Activated CD4-positive, alpha-beta memory T cell treated with anti-CD3 and anti-CD28 coated beads, Interleukin-2, amount 10 ng/mL, durations not matched to agents 7 days and 5 days (primary cell): ENCODE measurements at regions of chr10 and their contacts with region 1.

Region 1: GRCh38 chr10:3776796-3777571 is 8.0 kb downstream of the KLF6 start:
- DNase-seq: peak; percentile 64
- H3K4me3 Mint-ChIP-seq: peak overlapping the region; percentile 47
- H3K27ac Mint-ChIP-seq: peak overlapping the region; percentile 58
- H3K4me1 Mint-ChIP-seq: peaks cover 69% of the 10 kb centered on the region
- H3K27me3 Mint-ChIP-seq: no peaks in the 10 kb centered on the region

Region 2: GRCh38 chr10:3197348-3198003 is 579.5 kb before region 1 on chr10:
- CTCF ChIA-PET with region 1: no interaction called
- POLR2A ChIA-PET with region 1: interaction called, 11 read pairs
- DNase-seq: peak; percentile 90
- H3K4me3 Mint-ChIP-seq: peak overlapping the region; percentile 15
- H3K27ac Mint-ChIP-seq: no peak overlapping the region
- H3K4me1 Mint-ChIP-seq: peaks cover 23% of the 10 kb centered on the region
- H3K27me3 Mint-ChIP-seq: peaks cover 85% of the 10 kb centered on the region

Region 3: GRCh38 chr10:3740157-3740871 is 36.7 kb before region 1 on chr10:
- CTCF ChIA-PET with region 1: interaction called, 4 read pairs
- POLR2A ChIA-PET with region 1: interaction called, 63 read pairs
- DNase-seq: no peak
- H3K4me3 Mint-ChIP-seq: no peak overlapping the region
- H3K27ac Mint-ChIP-seq: peak overlapping the region; percentile 80
- H3K4me1 Mint-ChIP-seq: peaks cover 34% of the 10 kb centered on the region
- H3K27me3 Mint-ChIP-seq: peaks cover 2% of the 10 kb centered on the region

Region 4: DNA sequence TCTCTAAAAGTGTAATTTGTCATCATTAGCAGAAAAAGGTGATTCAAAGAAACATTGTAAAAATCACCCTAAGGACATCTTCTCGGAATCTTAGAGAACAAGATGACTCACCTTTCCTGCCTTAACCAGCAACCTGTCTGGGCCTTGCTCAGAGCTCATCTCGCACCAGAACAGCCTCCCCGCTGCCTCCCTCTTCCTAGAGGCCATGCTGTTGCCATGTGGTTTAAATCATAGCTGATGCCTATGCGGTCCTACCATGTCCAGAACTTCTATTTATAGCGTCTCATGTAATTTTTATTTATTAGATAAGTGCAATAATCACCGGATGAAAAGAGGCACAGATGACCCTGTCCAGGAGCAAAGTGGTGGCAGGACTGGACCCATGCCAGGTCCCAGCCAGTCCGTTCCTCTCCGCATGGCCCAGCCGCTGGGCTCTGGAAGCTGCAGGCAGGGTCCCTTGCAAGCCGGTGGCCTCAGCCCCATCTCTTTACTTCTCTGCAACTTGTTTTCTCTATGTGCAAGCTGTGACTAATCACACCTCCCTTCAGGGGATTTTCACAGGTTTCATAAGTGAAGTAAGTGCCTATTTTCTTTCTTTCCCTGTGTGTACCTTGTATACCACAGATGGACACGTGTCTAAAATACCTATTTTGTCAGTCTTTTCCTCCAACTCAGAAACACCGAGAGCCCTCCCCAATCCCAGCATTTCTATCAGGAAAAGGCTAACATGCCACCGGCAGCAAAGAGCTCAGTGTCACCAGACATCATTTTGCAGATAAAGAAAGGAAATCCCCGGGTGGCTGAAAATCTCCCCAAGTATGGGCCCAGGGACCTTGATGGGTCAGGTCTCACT is 19.1 kb before region 1 on chr10:
- CTCF ChIA-PET with region 1: interaction called, 11 read pairs
- POLR2A ChIA-PET with region 1: interaction called, 206 read pairs
- DNase-seq: peak; percentile 80
- H3K4me3 Mint-ChIP-seq: peak overlapping the region; percentile 46
- H3K27ac Mint-ChIP-seq: peak overlapping the region; percentile 97
- H3K4me1 Mint-ChIP-seq: peaks cover 83% of the 10 kb centered on the region
- H3K27me3 Mint-ChIP-seq: no peaks in the 10 kb centered on the region

Region 5: DNA sequence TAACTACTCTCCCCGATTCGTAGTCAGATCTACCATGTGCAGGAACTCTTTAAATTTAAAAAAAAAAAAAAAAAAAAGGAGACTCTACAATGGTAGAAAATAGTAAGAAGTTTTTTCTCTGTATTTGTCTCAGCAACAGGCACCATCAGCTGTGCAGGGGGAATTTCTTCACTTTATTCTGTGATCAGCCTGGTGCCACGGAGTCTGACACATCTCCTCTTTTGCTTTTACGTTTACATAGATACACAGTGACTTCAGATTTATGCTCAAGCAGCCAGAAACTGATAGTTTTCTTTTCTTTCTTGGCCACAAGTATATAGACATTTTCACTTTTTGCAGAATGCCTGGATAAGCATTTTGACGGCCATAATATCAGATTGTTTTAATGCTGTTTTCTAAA is 858.4 kb after region 1 on chr10:
- CTCF ChIA-PET with region 1: no interaction called
- POLR2A ChIA-PET with region 1: no interaction called
- DNase-seq: no peak
- H3K4me3 Mint-ChIP-seq: no peak overlapping the region
- H3K27ac Mint-ChIP-seq: no peak overlapping the region
- H3K4me1 Mint-ChIP-seq: no peaks in the 10 kb centered on the region
- H3K27me3 Mint-ChIP-seq: no peaks in the 10 kb centered on the region